CD4-positive, alpha-beta memory T cell (primary cell): ENCODE measurements at regions of chr3 and their contacts with region 1.

Region 1: GRCh38 chr3:153043729-153044328 is 118.2 kb upstream of the RAP2B start:
- DNase-seq: no peak
- H3K4me3 ChIP-seq: no peak overlapping the region
- H3K4me3 Mint-ChIP-seq: no peak overlapping the region
- H3K27ac ChIP-seq: no peak overlapping the region
- H3K27ac Mint-ChIP-seq: no peak overlapping the region
- H3K4me1 ChIP-seq: no peaks in the 10 kb centered on the region
- H3K4me1 Mint-ChIP-seq: peaks cover 0 to 5% (median 4%) of the 10 kb centered on the region in 4 donors
- H3K27me3 ChIP-seq: no peaks in the 10 kb centered on the region
- H3K27me3 Mint-ChIP-seq: peaks cover 0 to 1% of the 10 kb centered on the region in 2 donors

Region 2: GRCh38 chr3:152957543-152957942 is 86.3 kb before region 1 on chr3:
- CTCF ChIA-PET with region 1: no interaction called
- POLR2A ChIA-PET with region 1: no interaction called
- intact Hi-C with region 1: no loop called
- DNase-seq: no peak
- H3K4me3 ChIP-seq: no peak overlapping the region
- H3K4me3 Mint-ChIP-seq: no peak overlapping the region
- H3K27ac ChIP-seq: no peak overlapping the region
- H3K27ac Mint-ChIP-seq: no peak overlapping the region
- H3K4me1 ChIP-seq: no peaks in the 10 kb centered on the region
- H3K4me1 Mint-ChIP-seq: no peaks in the 10 kb centered on the region
- H3K27me3 ChIP-seq: no peaks in the 10 kb centered on the region
- H3K27me3 Mint-ChIP-seq: peaks cover 0 to 2% of the 10 kb centered on the region in 2 donors

Region 3: DNA sequence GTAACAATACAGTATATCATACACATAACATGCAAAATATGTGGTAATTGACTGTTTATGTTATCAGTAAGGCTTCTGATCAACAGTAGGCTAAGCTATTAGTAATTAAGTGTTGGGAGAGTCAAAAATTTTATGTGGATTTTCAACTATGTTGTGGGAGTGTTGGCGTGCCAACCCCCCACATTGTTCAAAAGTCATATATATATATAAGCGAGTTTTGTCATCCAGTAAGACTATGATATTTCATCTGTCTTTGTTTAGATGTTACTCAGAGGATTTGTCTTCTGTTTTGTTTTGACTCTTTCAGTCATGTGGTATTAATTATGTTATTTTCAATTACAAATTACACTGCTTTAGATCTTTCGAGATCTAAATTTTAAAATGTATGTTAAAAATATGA is 67.2 kb after region 1 on chr3:
- CTCF ChIA-PET with region 1: no interaction called
- POLR2A ChIA-PET with region 1: no interaction called
- intact Hi-C with region 1: no loop called
- DNase-seq: no peak
- H3K4me3 ChIP-seq: no peak overlapping the region
- H3K4me3 Mint-ChIP-seq: no peak overlapping the region
- H3K27ac ChIP-seq: no peak overlapping the region
- H3K27ac Mint-ChIP-seq: no peak overlapping the region
- H3K4me1 ChIP-seq: no peaks in the 10 kb centered on the region
- H3K4me1 Mint-ChIP-seq: no peaks in the 10 kb centered on the region
- H3K27me3 ChIP-seq: no peaks in the 10 kb centered on the region
- H3K27me3 Mint-ChIP-seq: peaks cover 0 to 2% of the 10 kb centered on the region in 2 donors

Region 4: GRCh38 chr3:153209596-153209995 is 165.8 kb after region 1 on chr3:
- CTCF ChIA-PET with region 1: interaction called, 12 read pairs
- POLR2A ChIA-PET with region 1: interaction called, 3 read pairs
- intact Hi-C with region 1: no loop called
- DNase-seq: no peak
- H3K4me3 ChIP-seq: no peak overlapping the region
- H3K4me3 Mint-ChIP-seq: peak overlapping the region in 6 of 8 donors; percentile 59 to 80 (median 72)
- H3K27ac ChIP-seq: no peak overlapping the region
- H3K27ac Mint-ChIP-seq: peak overlapping the region in 5 of 7 donors; percentile 54 to 85 (median 72)
- H3K4me1 ChIP-seq: peaks cover 20% of the 10 kb centered on the region
- H3K4me1 Mint-ChIP-seq: peaks cover 26 to 42% (median 33%) of the 10 kb centered on the region in 4 donors
- H3K27me3 ChIP-seq: no peaks in the 10 kb centered on the region
- H3K27me3 Mint-ChIP-seq: no peaks in the 10 kb centered on the region

Region 5: DNA sequence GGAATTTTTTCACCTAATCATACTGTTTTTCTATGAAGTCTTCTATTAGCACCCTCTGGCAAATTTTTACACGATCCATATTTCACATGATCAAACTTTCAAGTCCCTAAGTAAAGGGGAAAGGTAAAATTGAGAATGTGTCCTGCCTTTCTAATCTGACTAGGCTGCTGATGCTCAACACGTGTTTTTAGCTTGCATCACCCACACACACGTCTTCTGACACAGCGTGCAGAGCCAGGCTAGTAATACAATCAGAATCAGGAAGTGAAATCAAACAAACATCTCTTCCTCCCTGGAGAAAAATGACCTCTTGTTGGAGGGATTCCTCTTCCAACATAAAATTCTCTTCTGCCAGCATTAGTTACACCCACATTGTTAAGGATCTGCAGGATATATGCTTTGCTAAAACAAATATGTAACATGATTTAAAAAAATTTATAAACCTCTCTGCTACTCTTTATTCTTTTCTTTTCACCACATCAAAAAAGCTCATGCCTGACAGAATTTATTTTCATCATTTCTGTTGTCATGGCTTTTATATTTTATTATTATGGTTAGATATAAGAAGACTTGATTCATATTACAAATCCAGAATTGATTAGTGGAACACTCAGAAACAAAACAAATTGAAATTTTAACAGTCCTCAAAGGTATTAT is 240.6 kb after region 1 on chr3:
- CTCF ChIA-PET with region 1: interaction called, 83 read pairs
- POLR2A ChIA-PET with region 1: interaction called, 8 read pairs
- intact Hi-C with region 1: no loop called
- DNase-seq: peak; percentile 42 to 59 (median 50)
- H3K4me3 ChIP-seq: no peak overlapping the region
- H3K4me3 Mint-ChIP-seq: peak overlapping the region in 7 of 8 donors; percentile 57 to 81 (median 65)
- H3K27ac ChIP-seq: peak overlapping the region; percentile 20
- H3K27ac Mint-ChIP-seq: peak overlapping the region; percentile 74 to 97 (median 91)
- H3K4me1 ChIP-seq: peaks cover 51% of the 10 kb centered on the region
- H3K4me1 Mint-ChIP-seq: peaks cover 34 to 49% (median 43%) of the 10 kb centered on the region in 4 donors
- H3K27me3 ChIP-seq: no peaks in the 10 kb centered on the region
- H3K27me3 Mint-ChIP-seq: no peaks in the 10 kb centered on the region

Region 6: DNA sequence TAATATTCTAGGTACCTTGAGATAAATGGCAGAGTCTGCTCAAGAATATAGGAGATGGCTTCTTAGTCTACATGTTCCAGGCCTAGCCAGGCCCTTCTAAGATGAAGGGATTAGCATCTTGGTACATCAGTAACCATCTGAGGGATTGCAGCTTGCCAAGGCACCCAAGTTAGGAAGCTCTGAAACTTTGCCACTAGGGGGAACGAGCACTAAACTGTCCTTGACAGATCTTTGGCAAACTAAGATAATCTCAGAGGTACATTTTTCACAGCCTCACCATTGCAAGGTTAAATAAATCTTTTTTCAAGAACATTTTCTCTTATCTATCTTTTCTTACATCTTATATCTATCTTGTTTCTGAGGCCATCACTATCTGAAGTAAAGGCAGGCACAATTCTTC is 469.4 kb after region 1 on chr3:
- CTCF ChIA-PET with region 1: interaction called, 3 read pairs
- POLR2A ChIA-PET with region 1: no interaction called
- intact Hi-C with region 1: loop called (anchors 2 kb)
- DNase-seq: peak in 4 of 5 donors; percentile 12 to 20 (median 12)
- H3K4me3 ChIP-seq: no peak overlapping the region
- H3K4me3 Mint-ChIP-seq: no peak overlapping the region
- H3K27ac ChIP-seq: no peak overlapping the region
- H3K27ac Mint-ChIP-seq: no peak overlapping the region
- H3K4me1 ChIP-seq: no peaks in the 10 kb centered on the region
- H3K4me1 Mint-ChIP-seq: peaks cover 0 to 4% (median 1%) of the 10 kb centered on the region in 4 donors
- H3K27me3 ChIP-seq: no peaks in the 10 kb centered on the region
- H3K27me3 Mint-ChIP-seq: peaks cover 0 to 2% of the 10 kb centered on the region in 2 donors

Region 7: GRCh38 chr3:153688301-153689120 is 644.7 kb after region 1 on chr3:
- CTCF ChIA-PET with region 1: interaction called, 5 read pairs
- POLR2A ChIA-PET with region 1: no interaction called
- intact Hi-C with region 1: loop called (anchors 2 kb)
- DNase-seq: no peak
- H3K4me3 ChIP-seq: no peak overlapping the region
- H3K4me3 Mint-ChIP-seq: no peak overlapping the region
- H3K27ac ChIP-seq: no peak overlapping the region
- H3K27ac Mint-ChIP-seq: no peak overlapping the region
- H3K4me1 ChIP-seq: no peaks in the 10 kb centered on the region
- H3K4me1 Mint-ChIP-seq: peaks cover 0 to 3% (median 1%) of the 10 kb centered on the region in 4 donors
- H3K27me3 ChIP-seq: no peaks in the 10 kb centered on the region
- H3K27me3 Mint-ChIP-seq: peaks cover 0 to 2% of the 10 kb centered on the region in 2 donors

Region 8: GRCh38 chr3:154252759-154253638 is 1209.2 kb after region 1 on chr3:
- CTCF ChIA-PET with region 1: no interaction called
- POLR2A ChIA-PET with region 1: no interaction called
- intact Hi-C with region 1: loop called (anchors 1 kb)
- DNase-seq: peak; percentile 32 to 66 (median 38)
- H3K4me3 ChIP-seq: no peak overlapping the region
- H3K4me3 Mint-ChIP-seq: no peak overlapping the region
- H3K27ac ChIP-seq: no peak overlapping the region
- H3K27ac Mint-ChIP-seq: peak overlapping the region in 4 of 7 donors; percentile 2 to 52 (median 38)
- H3K4me1 ChIP-seq: no peaks in the 10 kb centered on the region
- H3K4me1 Mint-ChIP-seq: peaks cover 0 to 4% (median 1%) of the 10 kb centered on the region in 4 donors
- H3K27me3 ChIP-seq: no peaks in the 10 kb centered on the region
- H3K27me3 Mint-ChIP-seq: no peaks in the 10 kb centered on the region